HEK293T (cell line): ENCODE measurements at regions of chr6 and their contacts with region 1.

Region 1: GRCh38 chr6:161370880-161371279 is 97.0 kb upstream of the AGPAT4 start:
- DNase-seq: peak; percentile 76

Region 2: DNA sequence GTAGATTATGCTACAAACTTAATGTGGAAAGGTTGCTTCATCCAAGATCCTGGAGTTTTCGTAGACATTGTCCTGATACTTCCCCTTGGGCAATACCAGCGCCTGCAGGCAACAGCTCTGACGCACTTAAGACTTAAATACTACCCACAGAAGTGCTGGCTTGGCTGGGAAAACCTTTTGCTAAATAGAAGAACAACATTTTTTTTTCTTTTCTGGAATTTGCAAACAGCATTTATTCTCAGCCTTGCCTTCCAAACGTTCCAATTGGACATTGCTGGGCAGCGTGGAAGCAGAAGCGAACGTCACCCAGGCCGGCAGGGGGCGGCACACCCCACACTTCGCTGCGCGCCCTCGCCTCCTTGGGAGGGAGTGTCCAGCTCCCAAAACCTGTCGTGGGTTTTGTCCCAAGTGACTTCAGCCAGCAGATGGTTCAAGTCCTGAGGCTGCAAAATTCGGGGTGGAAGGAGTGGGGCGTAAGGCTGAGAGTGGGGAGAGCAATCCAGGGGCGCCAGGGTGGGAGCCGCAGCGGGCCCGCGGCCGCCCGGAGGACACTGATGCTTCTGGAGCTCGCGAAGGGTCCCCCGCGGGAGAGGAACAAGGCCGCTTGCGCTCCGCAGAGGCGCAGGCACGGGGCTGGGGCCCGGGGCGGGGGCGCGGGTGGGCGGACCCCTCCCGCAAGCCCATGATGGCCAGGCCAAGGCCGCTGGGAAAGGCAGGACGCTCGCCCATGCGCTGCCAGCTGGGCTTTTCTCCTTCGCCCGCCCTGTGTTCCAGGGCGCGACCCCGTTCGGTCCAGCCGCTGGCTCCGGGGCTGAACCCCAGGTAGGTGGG is 440.1 kb before region 1 on chr6:
- CTCF ChIA-PET with region 1: interaction called, 69 read pairs
- POLR2A ChIA-PET with region 1: no interaction called
- DNase-seq: peak; percentile 88

Region 3: DNA sequence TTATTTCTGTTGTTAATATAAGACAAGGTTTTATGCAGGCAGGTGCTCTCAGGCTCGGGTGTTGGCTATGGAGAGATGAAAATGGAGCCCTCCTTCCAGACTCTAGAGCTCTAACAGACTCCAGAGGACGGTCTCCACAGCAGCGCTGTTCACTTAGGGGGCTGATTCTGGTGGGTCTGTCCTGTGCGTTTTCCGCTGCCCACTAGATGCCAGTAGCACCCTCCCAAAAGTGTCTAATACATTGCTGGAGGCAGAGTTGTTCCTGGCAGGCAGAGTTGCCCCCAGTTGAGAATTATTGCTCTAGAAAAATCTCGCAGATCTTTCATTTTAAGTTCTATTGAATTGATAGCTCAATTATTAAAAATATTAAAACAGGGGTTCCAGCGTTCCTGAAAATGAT is 269.4 kb before region 1 on chr6:
- CTCF ChIA-PET with region 1: interaction called, 11 read pairs
- POLR2A ChIA-PET with region 1: no interaction called
- DNase-seq: no peak

Region 4: GRCh38 chr6:161804838-161805237 is 434.0 kb after region 1 on chr6:
- CTCF ChIA-PET with region 1: no interaction called
- POLR2A ChIA-PET with region 1: no interaction called
- DNase-seq: no peak